ENCODE measurements at regions of chr1 and their contacts with region 1.

Region 1: DNA sequence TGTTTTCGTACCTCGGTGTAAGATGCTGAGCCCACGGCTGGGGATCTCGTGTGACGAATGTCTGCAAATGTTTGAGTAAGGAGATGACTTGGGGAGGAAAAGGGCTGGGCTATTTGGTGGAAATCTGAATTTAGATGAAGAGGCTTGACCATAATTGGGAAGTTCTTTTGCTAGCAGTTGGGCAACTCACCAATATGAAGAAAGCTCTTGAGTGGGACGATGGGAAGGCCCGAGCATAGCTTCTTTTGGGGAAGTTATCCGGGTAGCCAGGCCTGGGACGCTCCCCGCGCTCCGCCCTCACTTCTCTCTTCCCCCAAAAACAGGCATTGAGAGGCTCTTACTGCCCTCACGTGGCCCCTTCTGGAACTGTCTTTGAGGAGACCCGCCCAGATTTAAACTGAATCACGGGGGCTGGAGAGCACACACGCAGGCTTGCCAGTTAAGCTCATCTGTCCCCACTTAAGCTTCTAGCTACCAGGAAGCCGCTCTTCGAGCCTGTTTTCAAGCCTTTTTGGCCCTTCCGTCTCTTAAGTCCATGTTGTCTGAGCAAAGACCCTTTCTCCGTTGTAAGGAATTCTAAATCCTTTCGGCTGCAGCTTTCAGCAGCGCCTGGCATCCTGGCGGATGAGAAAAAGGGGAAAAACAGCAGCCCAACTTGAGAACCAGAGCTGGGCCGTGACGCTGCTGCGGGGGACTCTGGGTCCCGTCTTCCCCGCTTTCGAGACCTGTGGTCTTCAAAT is 93.1 kb downstream of the NID1 start:
- DNase-seq: peak; percentile 85
- H3K4me3 ChIP-seq: peak overlapping the region; percentile 47
- H3K27ac ChIP-seq: peak overlapping the region; percentile 98
- H3K27me3 ChIP-seq: no peaks in the 10 kb centered on the region
- CTCF ChIP-seq: peak; percentile 89

Region 2: GRCh38 chr1:235513495-235514366 is 458.0 kb before region 1 on chr1:
- CTCF ChIA-PET with region 1: interaction called, 25 read pairs
- POLR2A ChIA-PET with region 1: no interaction called
- DNase-seq: peak; percentile 49
- H3K4me3 ChIP-seq: no peak overlapping the region
- H3K27ac ChIP-seq: no peak overlapping the region
- H3K27me3 ChIP-seq: no peaks in the 10 kb centered on the region
- CTCF ChIP-seq: peak; percentile 93

Region 3: DNA sequence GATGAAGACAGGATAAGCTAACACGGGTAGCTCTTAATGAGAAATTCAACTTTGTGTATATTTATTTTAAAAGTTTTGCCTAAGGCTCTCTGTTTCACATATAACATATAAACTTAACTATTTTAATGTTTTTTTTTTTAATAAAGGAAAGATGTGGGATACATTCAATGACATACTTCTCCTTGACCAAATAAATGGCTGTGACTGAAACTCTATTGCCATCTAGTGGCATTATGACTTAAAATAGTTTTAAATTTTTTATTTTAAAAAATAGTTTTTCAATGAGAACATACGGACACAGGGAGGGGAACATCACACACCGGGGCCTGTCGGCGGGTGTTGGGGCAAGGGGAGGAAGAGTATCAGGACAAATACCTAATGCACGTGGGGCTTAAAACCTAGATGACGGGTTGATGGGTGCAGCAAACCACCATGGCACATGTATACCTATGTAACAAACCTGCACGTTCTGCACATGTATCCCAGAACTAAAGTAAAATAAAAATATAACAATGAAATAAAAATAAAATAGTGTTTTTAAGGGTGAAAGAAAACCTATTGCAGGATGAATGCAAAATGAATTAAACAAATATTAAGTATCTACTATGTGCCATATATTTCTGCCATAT is 188.5 kb before region 1 on chr1:
- CTCF ChIA-PET with region 1: interaction called, 89 read pairs
- POLR2A ChIA-PET with region 1: no interaction called
- DNase-seq: peak; percentile 15
- H3K4me3 ChIP-seq: no peak overlapping the region
- H3K27ac ChIP-seq: no peak overlapping the region
- H3K27me3 ChIP-seq: no peaks in the 10 kb centered on the region
- CTCF ChIP-seq: peak; percentile 60

Region 4: GRCh38 chr1:235831148-235831547 is 140.6 kb before region 1 on chr1:
- CTCF ChIA-PET with region 1: interaction called, 11 read pairs
- POLR2A ChIA-PET with region 1: no interaction called
- DNase-seq: no peak
- H3K4me3 ChIP-seq: no peak overlapping the region
- H3K27ac ChIP-seq: no peak overlapping the region
- H3K27me3 ChIP-seq: no peaks in the 10 kb centered on the region
- CTCF ChIP-seq: no peak

Region 5: GRCh38 chr1:235883261-235883927 is 88.3 kb before region 1 on chr1:
- CTCF ChIA-PET with region 1: interaction called, 10 read pairs
- POLR2A ChIA-PET with region 1: interaction called, 4 read pairs
- DNase-seq: peak; percentile 89
- H3K4me3 ChIP-seq: 0 out of 2 replicates have a peak overlapping the region, but pooled peaks have one; percentile 18
- H3K27ac ChIP-seq: peak overlapping the region; percentile 82
- H3K27me3 ChIP-seq: no peaks in the 10 kb centered on the region
- CTCF ChIP-seq: no peak

Region 6: DNA sequence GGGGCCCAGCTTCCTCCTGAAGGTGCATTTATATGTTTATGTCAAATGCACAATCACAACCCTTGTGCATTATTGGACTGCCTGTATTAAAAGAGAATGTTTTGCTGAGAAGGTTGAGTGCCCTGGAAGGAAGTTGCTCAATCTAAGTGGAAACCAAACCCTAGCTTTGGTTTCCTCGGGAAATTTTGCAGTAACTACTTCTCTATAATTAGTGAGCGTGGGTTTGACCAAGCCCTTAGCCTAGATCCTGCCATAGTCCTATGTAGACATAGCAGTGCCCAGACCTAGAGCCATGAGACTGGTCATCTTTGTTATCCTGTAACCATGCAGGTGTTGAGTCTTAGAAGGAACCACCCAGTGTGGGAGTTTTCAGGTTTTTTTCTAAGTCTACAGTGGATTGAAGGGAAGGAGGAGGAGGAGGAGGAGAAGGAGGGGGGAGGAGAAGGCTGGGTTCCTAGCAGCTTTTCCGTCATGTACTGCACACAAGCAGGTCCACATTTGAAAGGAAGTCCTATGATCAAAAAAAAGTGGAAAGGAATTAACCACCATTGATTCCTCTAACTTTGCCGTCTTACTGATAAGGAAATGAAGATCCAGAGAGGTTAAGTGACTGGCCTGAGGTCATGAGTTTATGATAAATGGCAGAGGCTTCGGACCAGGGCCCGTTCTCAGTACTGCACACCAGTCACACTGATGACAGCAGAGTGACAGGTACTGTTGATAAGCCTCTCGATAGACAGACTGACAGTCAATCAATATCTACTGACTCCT is 32.8 kb before region 1 on chr1:
- CTCF ChIA-PET with region 1: interaction called, 47 read pairs
- POLR2A ChIA-PET with region 1: interaction called, 4 read pairs
- DNase-seq: no peak
- H3K4me3 ChIP-seq: no peak overlapping the region
- H3K27ac ChIP-seq: no peak overlapping the region
- H3K27me3 ChIP-seq: no peaks in the 10 kb centered on the region
- CTCF ChIP-seq: no peak

Region 7: GRCh38 chr1:235984041-235984825 is 12.5 kb after region 1 on chr1:
- CTCF ChIA-PET with region 1: interaction called, 44 read pairs
- POLR2A ChIA-PET with region 1: interaction called, 9 read pairs
- DNase-seq: peak; percentile 48
- H3K4me3 ChIP-seq: no peak overlapping the region
- H3K27ac ChIP-seq: peak overlapping the region; percentile 97
- H3K27me3 ChIP-seq: no peaks in the 10 kb centered on the region
- CTCF ChIP-seq: no peak

Region 8: GRCh38 chr1:236253918-236254637 is 282.3 kb after region 1 on chr1:
- CTCF ChIA-PET with region 1: no interaction called
- POLR2A ChIA-PET with region 1: no interaction called
- DNase-seq: no peak
- H3K4me3 ChIP-seq: no peak overlapping the region
- H3K27ac ChIP-seq: no peak overlapping the region
- H3K27me3 ChIP-seq: no peaks in the 10 kb centered on the region
- CTCF ChIP-seq: no peak

Measured in AG04450 (cell line).